CD4-positive, alpha-beta memory T cell (primary cell): ENCODE measurements at regions of chr12 and their contacts with region 1.

Region 1: GRCh38 chr12:44812062-44812461 is 64.1 kb downstream of the NELL2 start:
- DNase-seq: peak; percentile 51 to 57 (median 56)
- H3K4me3 ChIP-seq: no peak overlapping the region
- H3K4me3 Mint-ChIP-seq: peak overlapping the region in 1 of 8 donors; percentile 18
- H3K27ac ChIP-seq: no peak overlapping the region
- H3K27ac Mint-ChIP-seq: peak overlapping the region in 2 of 7 donors; percentile 9 to 58
- H3K4me1 ChIP-seq: peaks cover 46% of the 10 kb centered on the region
- H3K4me1 Mint-ChIP-seq: peaks cover 11 to 53% (median 35%) of the 10 kb centered on the region in 4 donors
- H3K27me3 ChIP-seq: no peaks in the 10 kb centered on the region
- H3K27me3 Mint-ChIP-seq: no peaks in the 10 kb centered on the region

Region 2: GRCh38 chr12:44589697-44590096 is 222.4 kb before region 1 on chr12:
- CTCF ChIA-PET with region 1: no interaction called
- POLR2A ChIA-PET with region 1: no interaction called
- intact Hi-C with region 1: no loop called
- DNase-seq: no peak
- H3K4me3 ChIP-seq: no peak overlapping the region
- H3K4me3 Mint-ChIP-seq: no peak overlapping the region
- H3K27ac ChIP-seq: no peak overlapping the region
- H3K27ac Mint-ChIP-seq: peak overlapping the region in 2 of 7 donors; percentile 2 to 16
- H3K4me1 ChIP-seq: no peaks in the 10 kb centered on the region
- H3K4me1 Mint-ChIP-seq: peaks cover 0 to 5% (median 1%) of the 10 kb centered on the region in 4 donors
- H3K27me3 ChIP-seq: no peaks in the 10 kb centered on the region
- H3K27me3 Mint-ChIP-seq: no peaks in the 10 kb centered on the region

Region 3: DNA sequence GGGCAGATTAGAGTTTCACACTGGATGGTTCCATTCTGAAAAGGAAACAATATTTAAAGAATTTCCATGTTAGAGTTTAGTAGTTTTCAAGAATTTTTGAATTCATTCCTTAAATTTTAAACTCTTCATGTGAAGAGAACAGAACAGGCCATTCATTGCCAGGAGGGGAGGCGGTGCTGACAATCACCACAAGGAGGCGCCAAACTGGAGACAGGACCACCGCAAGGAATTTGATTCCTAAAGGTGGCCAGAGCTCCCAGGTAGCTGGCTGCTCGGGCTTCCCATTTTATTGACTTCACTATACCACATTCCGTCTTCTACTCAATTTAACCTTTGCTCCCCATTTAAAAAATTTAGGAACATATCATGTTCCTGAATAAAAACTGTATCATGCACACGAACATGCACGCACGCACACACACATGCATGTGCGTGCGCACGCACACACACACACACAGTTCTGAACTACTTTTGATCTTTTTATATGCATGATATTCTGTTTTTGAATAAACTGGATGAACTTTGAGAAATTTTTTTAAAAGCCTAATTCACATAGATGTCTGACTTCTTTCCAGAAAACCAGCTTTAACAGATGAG is 37.1 kb before region 1 on chr12:
- CTCF ChIA-PET with region 1: interaction called, 16 read pairs
- POLR2A ChIA-PET with region 1: no interaction called
- intact Hi-C with region 1: loop called (anchors 2 kb)
- DNase-seq: peak; percentile 44 to 54 (median 44)
- H3K4me3 ChIP-seq: no peak overlapping the region
- H3K4me3 Mint-ChIP-seq: no peak overlapping the region
- H3K27ac ChIP-seq: no peak overlapping the region
- H3K27ac Mint-ChIP-seq: peak overlapping the region in 2 of 7 donors; percentile 20 to 74
- H3K4me1 ChIP-seq: no peaks in the 10 kb centered on the region
- H3K4me1 Mint-ChIP-seq: peaks cover 0 to 4% (median 2%) of the 10 kb centered on the region in 4 donors
- H3K27me3 ChIP-seq: no peaks in the 10 kb centered on the region
- H3K27me3 Mint-ChIP-seq: no peaks in the 10 kb centered on the region

Region 4: GRCh38 chr12:44847888-44848702 is 36.0 kb after region 1 on chr12:
- CTCF ChIA-PET with region 1: interaction called, 14 read pairs
- POLR2A ChIA-PET with region 1: interaction called, 10 read pairs
- intact Hi-C with region 1: loop called (anchors 1 kb)
- DNase-seq: peak; percentile 79 to 88 (median 82)
- H3K4me3 ChIP-seq: peak overlapping the region in 1 of 2 donors; percentile 46
- H3K4me3 Mint-ChIP-seq: peak overlapping the region; percentile 67 to 86 (median 78)
- H3K27ac ChIP-seq: peak overlapping the region; percentile 62
- H3K27ac Mint-ChIP-seq: peak overlapping the region; percentile 92 to 100 (median 96)
- H3K4me1 ChIP-seq: peaks cover 88% of the 10 kb centered on the region
- H3K4me1 Mint-ChIP-seq: peaks cover 37 to 90% (median 59%) of the 10 kb centered on the region in 4 donors
- H3K27me3 ChIP-seq: no peaks in the 10 kb centered on the region
- H3K27me3 Mint-ChIP-seq: no peaks in the 10 kb centered on the region

Region 5: DNA sequence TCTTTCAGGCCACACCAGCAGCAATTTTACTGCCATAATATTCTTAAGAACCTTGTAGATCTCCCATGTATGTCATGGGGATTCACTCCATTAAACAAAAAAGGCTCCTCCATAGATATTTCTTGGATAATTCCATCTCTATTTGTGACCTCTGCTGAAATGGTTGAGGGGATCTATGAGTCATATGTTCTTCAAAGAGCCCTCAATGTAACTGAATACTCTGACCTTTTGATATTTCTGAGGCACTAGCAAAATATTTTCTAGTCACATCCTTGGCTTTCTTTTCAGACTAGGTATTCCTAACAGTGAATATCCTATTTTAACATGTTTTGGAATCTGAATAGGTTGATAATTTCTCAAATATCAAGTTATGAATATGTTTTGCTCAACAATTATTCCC is 57.4 kb after region 1 on chr12:
- CTCF ChIA-PET with region 1: interaction called, 228 read pairs
- POLR2A ChIA-PET with region 1: interaction called, 58 read pairs
- intact Hi-C with region 1: loop called (anchors 1 kb)
- DNase-seq: no peak
- H3K4me3 ChIP-seq: no peak overlapping the region
- H3K4me3 Mint-ChIP-seq: peak overlapping the region in 2 of 8 donors; percentile 5 to 36
- H3K27ac ChIP-seq: no peak overlapping the region
- H3K27ac Mint-ChIP-seq: peak overlapping the region in 3 of 7 donors; percentile 5 to 46 (median 33)
- H3K4me1 ChIP-seq: peaks cover 18% of the 10 kb centered on the region
- H3K4me1 Mint-ChIP-seq: peaks cover 13 to 70% (median 38%) of the 10 kb centered on the region in 4 donors
- H3K27me3 ChIP-seq: no peaks in the 10 kb centered on the region
- H3K27me3 Mint-ChIP-seq: peaks cover 1 to 13% of the 10 kb centered on the region in 2 donors

Region 6: DNA sequence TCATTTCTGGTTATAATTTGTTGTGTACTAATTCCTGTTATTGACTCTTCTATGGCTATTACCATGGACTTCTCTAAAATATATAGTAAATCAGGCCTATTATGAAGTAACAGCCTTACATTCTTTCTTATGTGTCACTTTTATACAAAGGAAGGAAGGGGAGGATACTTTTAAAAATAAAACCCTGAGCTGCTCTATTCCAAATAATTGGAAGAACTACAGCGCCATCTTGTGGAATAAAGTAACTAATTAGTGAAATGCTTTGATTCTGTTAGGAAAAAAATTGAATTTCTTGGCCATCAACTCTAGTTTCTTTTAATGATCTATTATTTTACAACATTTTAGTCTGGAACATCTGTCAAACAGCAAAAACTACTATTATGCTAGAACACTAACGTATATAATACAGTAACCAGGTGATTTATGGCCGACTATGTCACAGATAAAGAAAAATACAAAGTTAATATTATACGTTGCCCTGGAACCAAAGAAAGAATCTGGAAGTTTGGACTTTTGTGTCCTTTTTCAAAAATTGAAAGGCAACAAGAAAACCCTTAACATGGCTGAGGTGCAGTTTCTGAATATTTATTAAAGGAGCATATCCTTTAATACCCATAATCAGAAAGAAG is 119.0 kb after region 1 on chr12:
- CTCF ChIA-PET with region 1: interaction called, 73 read pairs
- POLR2A ChIA-PET with region 1: interaction called, 3 read pairs
- intact Hi-C with region 1: loop called (anchors 1 kb)
- DNase-seq: peak in 4 of 5 donors; percentile 61 to 68 (median 68)
- H3K4me3 ChIP-seq: no peak overlapping the region
- H3K4me3 Mint-ChIP-seq: no peak overlapping the region
- H3K27ac ChIP-seq: no peak overlapping the region
- H3K27ac Mint-ChIP-seq: no peak overlapping the region
- H3K4me1 ChIP-seq: no peaks in the 10 kb centered on the region
- H3K4me1 Mint-ChIP-seq: peaks cover 0 to 2% (median under 1%) of the 10 kb centered on the region in 4 donors
- H3K27me3 ChIP-seq: no peaks in the 10 kb centered on the region
- H3K27me3 Mint-ChIP-seq: no peaks in the 10 kb centered on the region